ENCODE measurements at regions of chr18 and their contacts with region 1.

Region 1: GRCh38 chr18:27605107-27605834 is 420.2 kb upstream of the CHST9 start:
- DNase-seq: peak; percentile 37
- CTCF ChIP-seq: peak; percentile 86

Region 2: GRCh38 chr18:27585601-27586173 is 19.6 kb before region 1 on chr18:
- CTCF ChIA-PET with region 1: interaction called, 17 read pairs
- POLR2A ChIA-PET with region 1: no interaction called
- DNase-seq: no peak
- CTCF ChIP-seq: no peak

Region 3: GRCh38 chr18:27619090-27619772 is 14.0 kb after region 1 on chr18:
- CTCF ChIA-PET with region 1: interaction called, 19 read pairs
- POLR2A ChIA-PET with region 1: no interaction called
- DNase-seq: no peak
- CTCF ChIP-seq: no peak

Region 4: DNA sequence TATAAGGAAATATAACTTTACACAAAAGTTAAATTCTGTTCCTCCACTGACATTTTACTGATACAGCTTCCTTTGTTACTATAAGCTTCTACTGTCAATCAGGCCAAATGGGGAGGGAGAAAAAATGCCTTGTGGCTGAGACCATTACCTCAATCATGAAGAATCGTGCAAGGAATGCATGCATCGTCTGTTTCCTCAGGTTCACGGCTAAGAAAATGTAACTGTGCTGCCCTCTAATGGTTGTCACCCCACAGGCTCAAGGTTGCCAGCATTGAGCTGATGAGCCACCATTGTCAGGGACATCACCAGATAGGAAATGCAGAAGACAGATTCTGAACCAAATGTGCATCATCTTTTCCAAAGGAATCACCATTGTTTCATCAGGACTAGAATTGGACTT is 144.7 kb after region 1 on chr18:
- CTCF ChIA-PET with region 1: interaction called, 12 read pairs
- POLR2A ChIA-PET with region 1: no interaction called
- DNase-seq: peak; percentile 3
- CTCF ChIP-seq: peak; percentile 25

Measured in GM10248 (cell line).